GM10248 (cell line): ENCODE measurements at regions of chr9 and their contacts with region 1.

Region 1: GRCh38 chr9:4640027-4640426 is 22.1 kb upstream of the PLPP6 start:
- DNase-seq: no peak
- CTCF ChIP-seq: peak; percentile 45

Region 2: DNA sequence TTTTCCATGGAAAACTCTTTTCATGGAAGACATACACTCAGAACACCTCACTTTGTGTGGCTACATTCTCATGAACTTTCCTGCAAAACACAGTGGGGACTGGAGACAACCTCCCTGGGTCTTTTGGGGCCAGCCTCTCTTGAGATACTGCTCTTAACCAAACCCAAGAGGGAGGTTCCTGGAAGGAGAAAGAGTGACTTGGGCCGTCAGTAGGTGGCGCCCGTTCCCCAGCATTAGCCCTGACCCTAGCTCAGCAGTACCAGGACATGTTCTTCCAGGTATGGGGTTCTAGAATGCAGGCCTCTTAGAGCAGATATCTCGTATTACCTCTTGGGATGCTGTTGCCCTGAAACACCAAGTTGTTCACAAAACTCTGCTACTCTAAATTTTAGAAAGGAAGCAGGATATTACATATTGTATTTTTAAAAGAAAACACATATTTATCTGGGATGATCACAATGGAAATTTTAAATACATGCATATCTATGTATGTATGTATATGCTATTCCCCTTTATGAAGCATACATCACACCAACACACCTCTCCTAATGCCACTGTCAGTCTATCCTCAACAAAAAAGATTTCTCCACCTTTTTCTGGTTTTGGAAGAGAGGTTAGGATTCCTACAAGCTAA is 324.3 kb before region 1 on chr9:
- CTCF ChIA-PET with region 1: interaction called, 13 read pairs
- POLR2A ChIA-PET with region 1: no interaction called
- DNase-seq: peak; percentile 75
- CTCF ChIP-seq: peak; percentile 84

Region 3: DNA sequence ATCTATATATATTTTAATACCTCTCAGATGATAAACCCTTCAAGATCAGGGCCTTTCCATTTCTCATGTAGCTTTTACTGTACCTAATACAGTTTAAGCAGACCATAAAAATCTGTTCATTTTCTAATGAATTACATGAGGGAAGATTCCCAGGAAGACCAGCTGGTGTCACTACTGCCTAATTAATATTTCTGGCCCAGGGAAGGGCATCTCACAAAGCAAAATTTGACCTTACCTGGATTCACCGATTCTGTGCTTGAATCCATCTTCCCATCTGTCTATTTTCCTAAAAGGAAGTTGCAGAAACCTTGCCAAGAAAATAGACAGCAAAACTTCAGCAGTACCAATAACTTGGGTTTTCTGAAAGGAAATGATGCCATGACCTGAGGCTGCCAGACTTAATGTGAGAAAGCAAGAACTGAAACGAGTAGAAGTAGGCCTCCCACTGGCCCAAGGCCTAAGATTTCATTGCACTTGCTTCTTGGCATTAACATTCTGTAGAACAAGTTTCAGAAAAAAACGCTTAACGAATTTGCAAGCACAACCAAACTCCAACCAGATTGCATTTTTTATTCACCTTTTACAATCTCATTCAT is 257.2 kb before region 1 on chr9:
- CTCF ChIA-PET with region 1: interaction called, 17 read pairs
- POLR2A ChIA-PET with region 1: no interaction called
- DNase-seq: peak; percentile 25
- CTCF ChIP-seq: peak; percentile 50

Region 4: GRCh38 chr9:4622016-4622415 is 18.0 kb before region 1 on chr9:
- CTCF ChIA-PET with region 1: interaction called, 12 read pairs
- POLR2A ChIA-PET with region 1: no interaction called
- DNase-seq: no peak
- CTCF ChIP-seq: no peak

Region 5: DNA sequence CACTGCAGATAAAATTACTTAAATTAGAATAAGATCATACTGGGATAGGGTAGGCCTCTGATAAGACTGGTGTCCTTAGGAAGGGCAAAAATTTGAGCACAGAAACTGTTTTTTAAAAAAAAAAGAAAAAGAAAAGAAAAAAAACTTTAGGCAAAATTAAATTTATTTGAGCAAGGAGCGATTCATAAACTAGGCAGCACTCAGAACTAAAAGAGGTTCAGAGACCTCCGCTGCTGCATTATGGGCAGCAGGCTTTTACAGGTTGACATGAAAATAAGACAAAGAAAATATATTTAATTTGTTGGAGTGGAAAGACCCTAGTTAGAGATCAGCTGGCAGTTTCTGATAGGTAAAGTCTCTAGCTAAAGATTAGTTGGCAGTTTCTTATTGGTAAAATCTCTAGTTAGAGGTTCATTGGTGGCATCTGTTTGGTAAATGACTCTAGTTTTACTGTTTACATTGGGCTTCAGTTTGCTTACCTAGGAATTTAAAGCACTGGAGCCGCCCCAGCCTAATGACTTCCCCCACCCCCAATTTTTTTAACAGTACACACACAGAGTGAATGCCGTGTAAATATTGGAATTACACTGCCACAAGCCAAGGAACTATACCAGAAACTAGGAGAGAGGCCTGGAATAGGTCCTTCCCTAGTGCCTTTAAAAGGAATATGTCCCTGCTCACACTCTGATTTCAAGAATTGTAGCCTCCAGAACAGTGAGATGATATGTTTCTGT is 17.6 kb after region 1 on chr9:
- CTCF ChIA-PET with region 1: interaction called, 10 read pairs
- POLR2A ChIA-PET with region 1: no interaction called
- DNase-seq: no peak
- CTCF ChIP-seq: no peak

Region 6: GRCh38 chr9:4762108-4762885 is 122.3 kb after region 1 on chr9:
- CTCF ChIA-PET with region 1: no interaction called
- POLR2A ChIA-PET with region 1: no interaction called
- DNase-seq: peak; percentile 60
- CTCF ChIP-seq: peak; percentile 88